ENCODE measurements at regions of chr2 and their contacts with region 1.

Region 1: DNA sequence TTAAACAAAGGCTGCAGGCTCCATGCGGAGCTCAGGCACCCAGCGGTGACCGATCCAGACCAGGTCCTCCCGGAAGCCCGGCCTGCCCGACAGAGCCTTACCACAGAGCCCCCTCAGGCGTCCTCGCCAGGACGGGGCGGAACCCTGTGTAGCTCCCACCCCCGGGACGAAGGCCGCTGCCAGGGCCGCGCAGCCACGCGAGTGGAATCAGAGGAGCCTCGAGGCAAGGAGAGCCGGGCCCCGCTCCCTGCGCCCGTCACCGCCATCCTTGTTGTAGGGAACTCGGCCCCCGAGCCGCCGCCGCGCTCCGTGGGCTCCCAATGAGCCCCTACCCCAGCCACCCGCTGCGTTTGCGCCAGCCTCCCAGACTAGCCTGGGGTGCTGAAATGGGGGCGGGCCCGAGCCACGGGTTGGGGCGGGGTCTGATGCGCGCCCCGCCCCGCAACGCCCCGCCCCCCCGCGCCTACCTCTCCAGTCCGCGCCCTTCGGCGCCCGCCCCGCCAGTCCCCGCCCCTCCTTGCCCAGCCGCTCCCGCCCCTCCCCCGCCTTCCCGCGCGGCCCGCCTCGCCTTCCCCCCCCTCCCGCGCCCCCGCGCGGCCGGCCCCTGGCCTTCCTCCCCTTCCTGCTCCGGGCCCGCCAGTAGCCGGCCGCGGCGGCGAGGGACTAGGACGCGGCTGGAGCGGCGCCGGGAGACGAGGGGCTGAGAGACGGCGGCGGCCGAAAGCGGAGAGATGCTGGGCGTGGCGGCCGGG is at the start of gene LIMS1:
- DNase-seq: peak; percentile 77
- ATAC-seq: peak; percentile 91
- H3K4me3 Mint-ChIP-seq: peak within 1 kb of the TSS; percentile 93
- H3K27ac Mint-ChIP-seq: peak within 1 kb of the TSS; percentile 88
- H3K4me1 Mint-ChIP-seq: peaks cover 30% of the 10 kb centered on the region
- H3K27me3 Mint-ChIP-seq: no peaks in the 10 kb centered on the region
- CTCF ChIP-seq: no peak
- total RNA-seq, gene LIMS1: 33.3 and 34.8 TPM in 2 replicates

Region 2: DNA sequence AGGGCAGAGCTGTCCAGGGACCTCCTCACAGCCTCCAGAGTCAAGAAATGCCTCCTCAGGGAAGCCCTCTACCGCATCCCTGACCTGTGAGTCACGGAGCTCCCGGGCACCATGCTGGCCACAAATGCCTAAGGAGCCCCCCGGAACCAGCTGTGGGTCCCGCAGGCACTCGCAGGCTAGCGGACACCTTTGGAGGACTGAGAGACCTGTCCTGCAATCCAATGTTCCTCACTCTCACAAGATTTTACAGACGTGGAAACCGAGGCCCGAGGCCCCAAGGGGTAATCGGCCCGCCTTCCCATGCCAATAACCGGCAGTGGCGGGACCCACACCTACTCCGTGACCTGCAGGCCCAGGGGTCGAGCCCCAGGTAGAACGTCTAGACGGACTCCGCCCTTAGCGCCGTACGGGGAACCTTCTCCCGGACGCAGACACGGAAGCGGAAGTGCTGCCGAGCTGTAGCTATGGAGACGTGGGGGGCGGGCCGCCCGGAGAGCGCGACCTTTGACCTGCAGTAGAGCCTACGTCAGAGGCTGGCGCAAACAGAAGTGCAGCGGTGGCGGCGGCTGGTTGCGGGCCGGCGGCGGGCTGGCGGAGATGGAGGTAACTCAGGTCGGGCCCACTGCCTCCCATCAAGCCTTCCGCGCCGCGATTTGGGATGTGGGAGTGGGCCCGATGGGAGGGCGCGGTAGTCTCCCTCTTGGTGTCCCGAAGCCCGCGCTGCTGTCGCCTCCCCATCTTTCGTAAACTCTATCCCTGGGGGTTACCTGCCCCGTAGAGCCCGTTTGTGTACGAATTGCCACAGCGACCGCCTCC is 85.1 kb before region 1 on chr2 and contains the start of gene GCC2:
- CTCF ChIA-PET with region 1: interaction called, 4 read pairs
- POLR2A ChIA-PET with region 1: interaction called, 40 read pairs
- intact Hi-C with region 1: loop called (anchors 1 kb)
- DNase-seq: peak; percentile 96
- ATAC-seq: peak; percentile 96
- H3K4me3 Mint-ChIP-seq: peak within 1 kb of the TSS; percentile 98
- H3K27ac Mint-ChIP-seq: peak within 1 kb of the TSS; percentile 96
- H3K4me1 Mint-ChIP-seq: peaks cover 53% of the 10 kb centered on the region
- H3K27me3 Mint-ChIP-seq: no peaks in the 10 kb centered on the region
- CTCF ChIP-seq: no peak
- total RNA-seq, gene GCC2: 44.0 and 53.8 TPM in 2 replicates

Region 3: GRCh38 chr2:108485253-108485652 is 48.8 kb before region 1 on chr2:
- CTCF ChIA-PET with region 1: no interaction called
- POLR2A ChIA-PET with region 1: no interaction called
- intact Hi-C with region 1: loop called (anchors 5 kb)
- DNase-seq: no peak
- ATAC-seq: no peak
- H3K4me3 Mint-ChIP-seq: no peak overlapping the region
- H3K27ac Mint-ChIP-seq: no peak overlapping the region
- H3K4me1 Mint-ChIP-seq: no peaks in the 10 kb centered on the region
- H3K27me3 Mint-ChIP-seq: no peaks in the 10 kb centered on the region
- CTCF ChIP-seq: no peak

Region 4: GRCh38 chr2:108575132-108575966 is 41.3 kb after region 1 on chr2:
- CTCF ChIA-PET with region 1: interaction called, 3 read pairs
- POLR2A ChIA-PET with region 1: interaction called, 16 read pairs
- intact Hi-C with region 1: no loop called
- DNase-seq: no peak
- ATAC-seq: peak; percentile 77
- H3K4me3 Mint-ChIP-seq: peak overlapping the region; percentile 46
- H3K27ac Mint-ChIP-seq: peak overlapping the region; percentile 53
- H3K4me1 Mint-ChIP-seq: peaks cover 36% of the 10 kb centered on the region
- H3K27me3 Mint-ChIP-seq: no peaks in the 10 kb centered on the region
- CTCF ChIP-seq: no peak

Region 5: GRCh38 chr2:108719149-108720044 is 185.4 kb after region 1 on chr2 and contains the start of gene RANBP2:
- CTCF ChIA-PET with region 1: no interaction called
- POLR2A ChIA-PET with region 1: interaction called, 5 read pairs
- intact Hi-C with region 1: loop called (anchors 1 kb)
- DNase-seq: peak; percentile 91
- ATAC-seq: peak; percentile 94
- H3K4me3 Mint-ChIP-seq: peak within 1 kb of the TSS; percentile 93
- H3K27ac Mint-ChIP-seq: peak within 1 kb of the TSS; percentile 97
- H3K4me1 Mint-ChIP-seq: peaks cover 24% of the 10 kb centered on the region
- H3K27me3 Mint-ChIP-seq: no peaks in the 10 kb centered on the region
- CTCF ChIP-seq: no peak
- total RNA-seq, gene RANBP2: 66.7 and 68.5 TPM in 2 replicates

Region 6: DNA sequence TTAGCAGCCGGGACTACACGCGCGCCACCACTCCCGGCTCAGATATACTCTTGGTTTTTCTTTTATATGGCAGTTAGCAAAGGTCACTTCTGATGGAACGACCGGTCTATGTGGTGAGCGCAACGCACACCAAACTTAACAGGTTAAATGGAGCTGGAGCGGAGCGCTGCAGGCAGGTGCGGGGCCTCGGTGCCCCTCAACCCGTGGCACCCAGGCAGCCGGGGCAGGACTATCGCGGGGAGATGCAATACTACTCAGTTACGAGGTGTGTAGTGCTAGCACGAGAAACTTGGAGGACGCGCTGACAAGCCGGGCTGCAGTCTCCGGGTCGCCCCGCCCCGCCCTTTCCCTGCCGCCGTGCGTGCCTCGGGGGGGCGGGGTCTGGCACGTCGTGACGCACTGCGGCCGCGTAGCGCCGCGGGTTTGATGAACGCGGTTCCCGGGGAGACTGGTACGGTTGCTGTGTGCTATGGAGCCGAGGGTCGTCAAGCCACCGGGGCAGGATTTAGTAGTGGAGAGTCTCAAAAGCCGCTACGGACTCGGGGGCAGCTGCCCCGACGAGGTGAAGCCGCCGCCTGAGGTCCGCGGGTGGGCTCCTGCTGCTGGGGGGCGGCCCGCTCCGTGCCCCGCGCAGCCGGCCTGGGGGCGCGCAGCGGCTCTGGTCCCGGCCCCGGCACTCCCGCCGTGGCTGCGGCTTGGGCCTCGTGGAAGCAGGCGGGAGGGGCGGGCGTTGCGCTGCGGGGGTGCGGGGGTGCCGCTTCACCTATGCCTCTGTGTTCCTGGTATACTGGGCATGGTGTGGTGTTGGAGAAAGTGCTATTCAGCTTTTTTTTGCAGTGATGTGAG is 252.6 kb after region 1 on chr2 and contains the start of gene CCDC138:
- CTCF ChIA-PET with region 1: no interaction called
- POLR2A ChIA-PET with region 1: no interaction called
- intact Hi-C with region 1: loop called (anchors 5 kb)
- DNase-seq: peak; percentile 92
- ATAC-seq: peak; percentile 97
- H3K4me3 Mint-ChIP-seq: peak within 1 kb of the TSS; percentile 99
- H3K27ac Mint-ChIP-seq: peak within 1 kb of the TSS; percentile 96
- H3K4me1 Mint-ChIP-seq: peaks cover 23% of the 10 kb centered on the region
- H3K27me3 Mint-ChIP-seq: no peaks in the 10 kb centered on the region
- CTCF ChIP-seq: no peak
- total RNA-seq, gene CCDC138: 10.3 and 10.6 TPM in 2 replicates

Region 7: DNA sequence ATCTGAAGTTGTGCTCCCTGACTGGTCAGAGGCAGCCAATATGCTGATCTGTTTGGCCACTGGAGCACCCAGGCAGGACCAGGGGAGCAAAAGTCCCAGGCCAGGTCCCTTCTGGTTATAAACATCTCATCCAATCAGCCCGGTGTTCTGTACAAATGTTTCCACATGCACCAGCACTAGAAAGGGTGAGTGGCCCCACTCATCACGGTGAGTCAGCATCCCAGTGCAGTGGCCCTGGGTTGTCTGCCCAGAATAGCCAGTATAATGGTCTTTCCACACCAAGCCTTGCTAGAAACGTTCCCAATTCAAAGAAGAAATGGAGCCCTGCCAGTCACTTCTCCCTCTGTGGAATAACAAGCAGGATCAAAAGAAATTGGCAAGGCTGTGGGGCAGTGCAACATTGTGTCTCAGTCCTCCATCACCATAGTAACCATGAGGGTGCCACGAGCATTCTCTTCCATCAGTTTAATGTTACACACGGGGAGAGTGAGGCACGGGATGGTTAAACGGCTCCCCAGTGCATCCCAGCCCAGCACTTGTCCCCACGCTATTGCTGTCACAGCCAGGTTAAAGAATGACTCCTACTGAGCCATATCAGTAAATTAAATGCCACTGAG is 904.9 kb after region 1 on chr2:
- CTCF ChIA-PET with region 1: no interaction called
- POLR2A ChIA-PET with region 1: no interaction called
- intact Hi-C with region 1: no loop called
- DNase-seq: no peak
- ATAC-seq: no peak
- H3K4me3 Mint-ChIP-seq: no peak overlapping the region
- H3K27ac Mint-ChIP-seq: no peak overlapping the region
- H3K4me1 Mint-ChIP-seq: no peaks in the 10 kb centered on the region
- H3K27me3 Mint-ChIP-seq: no peaks in the 10 kb centered on the region
- CTCF ChIP-seq: no peak